ENCODE measurements at regions of chr9 and their contacts with region 1.

Region 1: DNA sequence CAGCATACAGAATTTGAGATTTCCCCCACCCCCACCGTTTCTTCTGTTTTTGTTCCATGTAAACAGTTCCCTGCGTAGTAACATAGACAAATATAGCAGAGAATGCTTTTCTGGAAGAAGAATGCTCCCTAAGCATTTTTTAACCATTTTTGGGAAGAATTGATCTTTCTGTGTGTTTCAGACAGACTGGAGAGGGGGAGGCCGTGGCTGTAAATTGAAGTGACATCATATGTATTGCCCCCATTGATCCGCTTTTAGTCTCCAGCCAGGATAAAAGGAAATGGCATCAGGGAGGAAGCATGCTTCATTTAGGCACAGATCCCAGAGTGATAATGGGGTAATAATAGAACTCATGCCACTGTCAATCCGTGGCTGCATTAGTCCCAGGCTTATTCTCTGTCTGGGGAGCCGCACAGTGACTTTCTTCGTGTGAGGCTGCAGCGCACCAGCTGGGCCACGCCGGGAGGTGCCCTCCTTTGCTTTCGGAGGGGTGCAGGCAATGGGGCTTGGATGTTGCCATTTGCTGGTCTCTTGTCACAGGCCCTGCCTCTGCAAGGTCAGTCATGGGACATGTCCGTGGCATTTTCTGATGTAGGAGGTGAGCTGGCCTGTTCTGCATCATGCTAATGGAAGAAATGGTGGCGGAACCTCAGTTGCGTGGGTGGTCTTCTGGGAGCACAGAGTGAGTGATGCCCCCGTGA is 261.5 kb downstream of the FANCC start:
- DNase-seq: no peak
- H3K4me3 ChIP-seq: no peak overlapping the region
- H3K4me3 Mint-ChIP-seq: no peak overlapping the region
- H3K27ac Mint-ChIP-seq: peak overlapping the region; percentile 90
- H3K4me1 ChIP-seq: peaks cover 28% of the 10 kb centered on the region
- H3K4me1 Mint-ChIP-seq: peaks cover 44% of the 10 kb centered on the region
- H3K27me3 ChIP-seq: no peaks in the 10 kb centered on the region
- H3K27me3 Mint-ChIP-seq: no peaks in the 10 kb centered on the region
- CTCF ChIP-seq: no peak

Region 2: GRCh38 chr9:95078958-95079357 is 23.0 kb after region 1 on chr9:
- CTCF ChIA-PET with region 1: no interaction called
- POLR2A ChIA-PET with region 1: no interaction called
- intact Hi-C with region 1: loop called (anchors 2 kb)
- DNase-seq: peak; percentile 75 to 79
- H3K4me3 ChIP-seq: no peak overlapping the region
- H3K4me3 Mint-ChIP-seq: peak overlapping the region; percentile 14
- H3K27ac Mint-ChIP-seq: peak overlapping the region; percentile 53
- H3K4me1 ChIP-seq: peaks cover 39% of the 10 kb centered on the region
- H3K4me1 Mint-ChIP-seq: peaks cover 43% of the 10 kb centered on the region
- H3K27me3 ChIP-seq: no peaks in the 10 kb centered on the region
- H3K27me3 Mint-ChIP-seq: no peaks in the 10 kb centered on the region
- CTCF ChIP-seq: no peak